Right cardiac atrium (tissue), 5 donors: ENCODE measurements at regions of chr11 and their contacts with region 1.

Region 1: DNA sequence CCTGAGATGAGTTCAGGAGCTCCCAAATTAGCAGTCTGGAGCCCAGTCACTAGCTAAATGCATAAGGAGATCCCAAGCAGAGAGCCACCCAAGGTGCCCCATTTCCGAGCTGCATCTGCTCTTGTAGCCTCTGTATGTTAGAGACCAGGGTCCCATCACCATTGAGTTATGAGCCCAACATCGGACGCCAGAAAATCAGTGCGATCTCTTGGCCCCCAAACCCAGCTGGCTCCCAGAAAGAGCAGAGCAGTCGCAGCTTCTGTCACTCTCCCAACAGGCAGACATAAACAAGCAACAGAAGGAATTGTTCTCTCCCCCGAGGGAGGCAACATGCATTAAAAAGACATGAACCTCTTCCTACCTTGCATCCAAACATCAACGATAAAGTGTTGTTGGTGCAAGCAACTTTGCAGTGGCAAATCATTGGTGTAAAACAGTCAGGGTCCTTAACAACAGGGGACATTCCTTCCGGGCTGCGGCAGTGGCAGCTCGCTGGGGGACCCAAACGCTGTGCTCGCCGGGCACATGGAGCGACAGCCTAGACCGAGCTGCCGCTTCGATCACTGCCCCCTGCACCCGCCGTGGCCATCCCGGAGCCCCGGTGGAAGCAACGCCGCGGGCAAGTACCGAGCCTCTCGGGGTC is 907.1 kb downstream of the DLG2 start:
- DNase-seq: peak; percentile 14 to 58 (median 47)
- ATAC-seq: peak; percentile 66 to 67
- H3K4me3 ChIP-seq: peak overlapping the region; percentile 70
- H3K27ac ChIP-seq: no peak overlapping the region
- H3K4me1 ChIP-seq: no peaks in the 10 kb centered on the region
- H3K27me3 ChIP-seq: no peaks in the 10 kb centered on the region

Region 2: DNA sequence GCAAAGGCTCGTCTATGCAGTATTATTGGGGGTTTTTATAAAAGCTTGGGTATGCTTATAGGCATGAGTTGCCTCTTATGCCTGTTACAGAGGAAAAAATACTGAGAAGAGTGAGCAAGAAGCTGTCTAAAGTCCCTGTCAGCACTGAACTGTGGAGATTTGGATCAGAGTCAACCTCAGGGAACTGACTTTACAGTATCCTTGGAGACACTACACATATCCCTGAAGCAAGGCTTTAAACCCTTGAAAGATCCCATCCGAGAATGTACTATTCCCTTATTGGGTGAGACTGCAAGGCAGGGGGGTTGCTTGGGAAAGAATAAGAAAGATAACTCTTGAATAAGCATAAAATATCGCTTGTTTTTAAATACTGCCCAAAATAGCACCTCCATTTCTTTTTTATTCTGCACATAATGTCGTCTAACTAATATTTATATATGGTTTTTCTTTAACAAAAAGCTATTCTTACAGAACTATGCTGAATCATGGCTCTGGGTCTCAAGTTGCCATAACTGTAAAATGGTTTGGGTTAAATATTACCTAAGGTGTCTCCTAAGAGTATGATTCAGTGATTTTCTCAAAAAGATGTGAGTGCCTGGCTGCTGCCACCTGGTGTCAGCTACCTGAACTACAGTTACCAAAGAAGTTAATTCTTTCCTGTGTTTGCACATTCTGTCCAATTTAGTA is 155.7 kb before region 1 on chr11:
- intact Hi-C with region 1: loop called in 2 of 4 experiments (anchors 5 to 10 kb)
- DNase-seq: peak in 1 of 3 donors; percentile 39
- ATAC-seq: peak in 1 of 2 donors; percentile 11
- H3K4me3 ChIP-seq: no peak overlapping the region
- H3K27ac ChIP-seq: no peak overlapping the region
- H3K4me1 ChIP-seq: no peaks in the 10 kb centered on the region
- H3K27me3 ChIP-seq: no peaks in the 10 kb centered on the region

Region 3: DNA sequence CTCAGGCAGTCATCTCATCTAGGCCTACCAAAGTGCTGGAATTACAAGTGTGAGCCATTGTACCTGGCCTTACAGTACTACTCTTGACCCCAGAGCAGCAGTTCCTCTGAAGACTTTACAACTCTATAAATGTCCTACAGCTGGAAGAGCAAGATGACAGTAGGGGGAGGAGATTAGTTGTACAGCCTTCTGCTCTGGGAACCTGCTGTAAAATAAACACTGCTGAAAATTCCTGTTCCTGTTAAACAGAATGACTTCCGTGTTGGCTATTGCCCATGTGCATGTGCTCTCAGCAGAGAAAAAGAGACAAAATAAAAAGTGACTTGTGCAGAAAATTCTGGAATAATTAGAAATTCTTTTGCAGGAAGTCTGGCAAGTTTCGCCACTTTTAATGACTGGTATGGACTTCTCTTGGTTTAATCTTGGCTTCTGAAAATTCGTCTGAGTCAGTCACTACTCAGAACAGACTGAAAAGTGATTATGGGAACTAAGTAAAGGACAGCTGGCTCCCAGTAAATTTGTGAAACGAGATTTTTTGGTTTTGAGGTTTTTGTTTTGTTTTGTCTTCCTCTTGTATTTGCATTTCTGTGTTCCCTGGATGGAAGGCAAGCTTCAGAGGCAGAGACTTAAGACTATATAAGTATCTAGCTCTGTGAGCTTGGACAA is 48.6 kb before region 1 on chr11:
- intact Hi-C with region 1: no loop called
- DNase-seq: no peak
- ATAC-seq: no peak
- H3K4me3 ChIP-seq: no peak overlapping the region
- H3K27ac ChIP-seq: no peak overlapping the region
- H3K4me1 ChIP-seq: no peaks in the 10 kb centered on the region
- H3K27me3 ChIP-seq: no peaks in the 10 kb centered on the region

Region 4: GRCh38 chr11:84775503-84775902 is 55.4 kb after region 1 on chr11:
- intact Hi-C with region 1: no loop called
- DNase-seq: no peak
- ATAC-seq: no peak
- H3K4me3 ChIP-seq: no peak overlapping the region
- H3K27ac ChIP-seq: no peak overlapping the region
- H3K4me1 ChIP-seq: no peaks in the 10 kb centered on the region
- H3K27me3 ChIP-seq: no peaks in the 10 kb centered on the region

Region 5: GRCh38 chr11:84819128-84819527 is 99.1 kb after region 1 on chr11:
- intact Hi-C with region 1: no loop called
- DNase-seq: no peak
- ATAC-seq: peak in 1 of 2 donors; percentile 11
- H3K4me3 ChIP-seq: no peak overlapping the region
- H3K27ac ChIP-seq: no peak overlapping the region
- H3K4me1 ChIP-seq: no peaks in the 10 kb centered on the region
- H3K27me3 ChIP-seq: no peaks in the 10 kb centered on the region

Region 6: GRCh38 chr11:85011173-85011572 is 291.1 kb after region 1 on chr11:
- intact Hi-C with region 1: no loop called
- DNase-seq: no peak
- ATAC-seq: no peak
- H3K4me3 ChIP-seq: no peak overlapping the region
- H3K27ac ChIP-seq: no peak overlapping the region
- H3K4me1 ChIP-seq: no peaks in the 10 kb centered on the region
- H3K27me3 ChIP-seq: no peaks in the 10 kb centered on the region